ENCODE measurements at regions of chr1 and their contacts with region 1.

Region 1: DNA sequence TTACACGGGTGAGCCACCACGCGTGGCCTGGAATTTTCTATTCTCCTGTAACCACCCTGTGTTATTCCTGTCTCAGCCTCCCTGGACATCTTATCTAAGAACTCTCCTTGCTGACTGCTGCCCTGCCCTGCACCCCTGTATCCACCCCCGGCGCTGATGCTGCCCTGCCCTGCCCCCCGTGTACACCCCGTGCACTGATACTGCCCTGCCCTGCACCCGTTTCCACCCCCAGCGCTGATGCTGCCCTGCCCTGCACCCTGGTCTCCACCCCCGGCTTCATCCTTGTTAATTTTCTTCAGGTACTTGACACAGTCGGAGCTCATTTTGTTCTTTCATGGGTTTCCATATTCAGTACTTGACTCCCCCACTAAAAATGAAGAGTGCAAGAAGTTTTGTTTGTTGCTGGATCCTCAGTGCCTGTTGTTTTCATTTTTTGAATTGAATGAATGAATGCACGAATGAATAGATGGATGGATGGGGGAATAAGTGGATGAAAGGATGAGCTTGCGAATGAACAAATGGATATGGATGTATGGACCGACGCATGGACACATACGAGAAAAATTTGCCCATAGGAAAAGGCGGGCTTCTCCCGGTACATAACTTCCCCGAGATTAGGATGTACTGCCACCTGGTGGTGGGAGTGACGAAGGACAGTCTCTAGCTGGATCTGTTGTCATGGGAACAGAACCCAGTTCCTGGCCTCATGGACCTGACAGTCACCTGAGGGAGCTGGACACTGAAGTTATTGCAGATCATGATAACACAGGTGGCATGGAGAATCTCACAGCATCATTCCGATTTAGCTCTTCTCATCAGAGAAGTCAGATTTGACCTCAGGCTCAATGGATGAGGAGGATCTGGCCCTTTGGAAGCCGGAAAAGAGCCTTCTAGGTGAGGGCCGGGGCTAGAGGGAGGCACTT is 14.9 kb downstream of the AADACL4 start:
- DNase-seq: peak; percentile 43 to 83 (median 76)
- ATAC-seq: peak; percentile 82
- H3K4me3 ChIP-seq: no peak overlapping the region
- H3K4me3 Mint-ChIP-seq: no peak overlapping the region
- H3K27ac ChIP-seq: no peak overlapping the region
- H3K27ac Mint-ChIP-seq: no peak overlapping the region
- H3K4me1 ChIP-seq: no peaks in the 10 kb centered on the region
- H3K4me1 Mint-ChIP-seq: peaks cover 5% of the 10 kb centered on the region
- H3K27me3 ChIP-seq: peaks cover 0 to 5% of the 10 kb centered on the region in 2 experiments
- H3K27me3 Mint-ChIP-seq: peaks cover 5% of the 10 kb centered on the region
- CTCF ChIP-seq: peak; percentile 98

Region 2: GRCh38 chr1:12113433-12114339 is 545.1 kb before region 1 on chr1:
- CTCF ChIA-PET with region 1: no interaction called
- POLR2A ChIA-PET with region 1: no interaction called
- intact Hi-C with region 1: loop called in 1 of 2 experiments (anchors 5 kb)
- DNase-seq: no peak
- ATAC-seq: no peak
- H3K4me3 ChIP-seq: no peak overlapping the region
- H3K4me3 Mint-ChIP-seq: no peak overlapping the region
- H3K27ac ChIP-seq: no peak overlapping the region
- H3K27ac Mint-ChIP-seq: peak overlapping the region; percentile 0
- H3K4me1 ChIP-seq: no peaks in the 10 kb centered on the region
- H3K4me1 Mint-ChIP-seq: peaks cover 3% of the 10 kb centered on the region
- H3K27me3 ChIP-seq: no peaks in the 10 kb centered on the region
- H3K27me3 Mint-ChIP-seq: no peaks in the 10 kb centered on the region
- CTCF ChIP-seq: no peak

Region 3: DNA sequence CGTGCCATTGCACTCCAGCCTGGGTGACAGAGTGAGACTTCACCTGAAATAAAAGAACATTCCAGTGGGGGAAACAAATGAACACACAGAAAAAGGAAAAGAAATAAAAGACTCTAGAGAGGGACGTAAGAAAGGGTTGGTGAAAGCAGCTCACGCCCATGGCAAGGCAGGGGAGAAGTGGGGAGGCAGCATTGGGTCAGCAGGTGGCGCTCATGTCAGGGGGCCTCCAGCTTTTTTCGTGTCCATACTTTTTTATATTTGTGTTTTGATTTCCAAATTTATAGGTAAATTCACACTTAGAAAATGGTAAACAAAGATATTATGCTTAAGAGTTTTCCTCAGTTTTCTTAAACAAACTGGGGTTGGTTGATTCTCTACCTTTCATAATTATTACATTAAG is 383.4 kb before region 1 on chr1:
- CTCF ChIA-PET with region 1: interaction called, 80 read pairs
- POLR2A ChIA-PET with region 1: no interaction called
- intact Hi-C with region 1: loop called (anchors 1 kb)
- DNase-seq: peak in 8 of 9 experiments; percentile 5 to 52 (median 34)
- ATAC-seq: no peak
- H3K4me3 ChIP-seq: no peak overlapping the region
- H3K4me3 Mint-ChIP-seq: no peak overlapping the region
- H3K27ac ChIP-seq: no peak overlapping the region
- H3K27ac Mint-ChIP-seq: no peak overlapping the region
- H3K4me1 ChIP-seq: no peaks in the 10 kb centered on the region
- H3K4me1 Mint-ChIP-seq: peaks cover 6% of the 10 kb centered on the region
- H3K27me3 ChIP-seq: no peaks in the 10 kb centered on the region
- H3K27me3 Mint-ChIP-seq: no peaks in the 10 kb centered on the region
- CTCF ChIP-seq: peak; percentile 37

Region 4: DNA sequence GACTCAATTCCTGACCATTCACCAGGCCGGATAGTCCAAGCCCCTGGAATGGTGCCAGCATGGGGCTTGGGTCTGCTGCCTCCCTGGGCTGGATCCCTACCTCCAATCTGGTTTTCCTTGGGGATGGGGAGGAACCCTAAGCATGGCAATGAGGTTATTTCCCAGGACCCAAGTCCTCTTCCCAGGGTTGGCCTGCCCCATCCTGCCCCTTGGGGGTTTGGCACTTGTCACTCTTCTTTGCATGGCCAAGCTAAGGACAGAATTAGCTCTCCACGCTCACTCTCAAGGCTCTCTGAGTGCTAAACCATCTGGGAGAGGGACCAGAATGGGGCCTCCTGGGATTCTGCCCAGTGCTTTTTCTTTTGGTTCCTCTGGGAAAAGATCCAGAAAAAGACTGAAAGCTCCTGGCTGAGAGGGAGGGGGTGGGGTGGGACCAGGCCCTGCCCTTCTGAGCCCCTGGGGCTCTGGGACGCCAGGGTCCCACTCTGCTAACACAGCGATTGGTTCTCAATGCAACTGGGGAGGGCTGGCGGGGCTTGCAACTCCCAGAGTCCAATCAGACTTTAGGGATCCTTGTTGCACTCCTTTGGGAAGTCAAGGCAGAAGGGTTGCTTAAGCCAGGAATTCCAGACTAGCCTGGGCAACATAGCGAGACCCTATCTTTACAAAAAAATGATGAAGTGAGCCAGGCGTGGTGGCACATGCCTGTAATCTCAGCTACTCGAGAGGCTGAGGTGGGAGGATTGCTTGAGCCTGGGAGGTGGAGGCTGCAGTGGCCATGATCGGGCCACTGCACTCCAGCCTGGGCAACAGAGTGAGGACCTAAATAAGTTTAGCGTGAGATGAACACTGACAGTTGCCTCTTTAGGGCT is 93.5 kb before region 1 on chr1:
- CTCF ChIA-PET with region 1: no interaction called
- POLR2A ChIA-PET with region 1: no interaction called
- intact Hi-C with region 1: no loop called
- DNase-seq: no peak
- ATAC-seq: no peak
- H3K4me3 ChIP-seq: no peak overlapping the region
- H3K4me3 Mint-ChIP-seq: no peak overlapping the region
- H3K27ac ChIP-seq: no peak overlapping the region
- H3K27ac Mint-ChIP-seq: no peak overlapping the region
- H3K4me1 ChIP-seq: no peaks in the 10 kb centered on the region
- H3K4me1 Mint-ChIP-seq: no peaks in the 10 kb centered on the region
- H3K27me3 ChIP-seq: no peaks in the 10 kb centered on the region
- H3K27me3 Mint-ChIP-seq: no peaks in the 10 kb centered on the region
- CTCF ChIP-seq: no peak

Region 5: GRCh38 chr1:12604114-12604874 is 54.5 kb before region 1 on chr1:
- CTCF ChIA-PET with region 1: interaction called, 13 read pairs
- POLR2A ChIA-PET with region 1: no interaction called
- intact Hi-C with region 1: loop called in 1 of 2 experiments (anchors 2 kb)
- DNase-seq: peak in 8 of 9 experiments; percentile 47 to 87 (median 72)
- ATAC-seq: peak; percentile 91
- H3K4me3 ChIP-seq: no peak overlapping the region
- H3K4me3 Mint-ChIP-seq: peak overlapping the region; percentile 50
- H3K27ac ChIP-seq: peak overlapping the region; percentile 22 to 59
- H3K27ac Mint-ChIP-seq: peak overlapping the region; percentile 95
- H3K4me1 ChIP-seq: peaks cover 36% of the 10 kb centered on the region
- H3K4me1 Mint-ChIP-seq: peaks cover 63% of the 10 kb centered on the region
- H3K27me3 ChIP-seq: no peaks in the 10 kb centered on the region
- H3K27me3 Mint-ChIP-seq: no peaks in the 10 kb centered on the region
- CTCF ChIP-seq: no peak

Region 6: DNA sequence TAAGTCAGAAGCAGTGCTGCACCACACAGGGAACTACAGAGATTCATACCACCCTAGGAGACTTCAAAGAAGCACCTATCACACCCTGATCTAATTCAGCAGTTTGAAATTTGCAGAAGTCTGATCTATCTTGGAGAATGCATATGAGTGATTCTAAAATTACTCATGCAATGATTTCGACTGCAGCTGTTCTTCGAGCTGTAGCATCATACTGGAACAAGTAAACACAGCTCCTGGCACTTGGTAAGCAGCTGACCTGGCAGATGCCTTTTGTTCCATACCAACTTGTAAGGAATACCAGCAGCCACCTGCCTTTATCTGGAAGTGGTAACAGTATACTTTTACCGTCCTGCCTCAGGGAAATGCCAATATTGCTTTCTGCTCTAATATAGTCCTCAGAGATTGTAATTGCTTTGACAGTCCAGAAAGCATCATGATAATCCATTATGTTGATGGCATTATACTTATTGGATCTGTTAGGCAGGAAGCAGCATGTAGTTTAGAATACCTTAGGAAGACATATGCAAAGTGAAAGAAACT is 10.8 kb after region 1 on chr1:
- CTCF ChIA-PET with region 1: interaction called, 17 read pairs
- POLR2A ChIA-PET with region 1: no interaction called
- intact Hi-C with region 1: no loop called
- DNase-seq: no peak
- ATAC-seq: no peak
- H3K4me3 ChIP-seq: no peak overlapping the region
- H3K4me3 Mint-ChIP-seq: no peak overlapping the region
- H3K27ac ChIP-seq: no peak overlapping the region
- H3K27ac Mint-ChIP-seq: no peak overlapping the region
- H3K4me1 ChIP-seq: no peaks in the 10 kb centered on the region
- H3K4me1 Mint-ChIP-seq: no peaks in the 10 kb centered on the region
- H3K27me3 ChIP-seq: no peaks in the 10 kb centered on the region
- H3K27me3 Mint-ChIP-seq: peaks cover 15% of the 10 kb centered on the region
- CTCF ChIP-seq: no peak

Measured in CD8-positive, alpha-beta T cell (primary cell).